HEK293T (cell line): ENCODE measurements at regions of chr5 and their contacts with region 1.

Region 1: GRCh38 chr5:158599157-158599556 is 500.6 kb downstream of the EBF1 start:
- DNase-seq: no peak

Region 2: GRCh38 chr5:158373608-158374395 is 225.4 kb before region 1 on chr5:
- CTCF ChIA-PET with region 1: interaction called, 10 read pairs
- POLR2A ChIA-PET with region 1: no interaction called
- DNase-seq: no peak